Cardiac septum (tissue), 1 donor: ENCODE measurements at regions of chr19 and their contacts with region 1.

Region 1: DNA sequence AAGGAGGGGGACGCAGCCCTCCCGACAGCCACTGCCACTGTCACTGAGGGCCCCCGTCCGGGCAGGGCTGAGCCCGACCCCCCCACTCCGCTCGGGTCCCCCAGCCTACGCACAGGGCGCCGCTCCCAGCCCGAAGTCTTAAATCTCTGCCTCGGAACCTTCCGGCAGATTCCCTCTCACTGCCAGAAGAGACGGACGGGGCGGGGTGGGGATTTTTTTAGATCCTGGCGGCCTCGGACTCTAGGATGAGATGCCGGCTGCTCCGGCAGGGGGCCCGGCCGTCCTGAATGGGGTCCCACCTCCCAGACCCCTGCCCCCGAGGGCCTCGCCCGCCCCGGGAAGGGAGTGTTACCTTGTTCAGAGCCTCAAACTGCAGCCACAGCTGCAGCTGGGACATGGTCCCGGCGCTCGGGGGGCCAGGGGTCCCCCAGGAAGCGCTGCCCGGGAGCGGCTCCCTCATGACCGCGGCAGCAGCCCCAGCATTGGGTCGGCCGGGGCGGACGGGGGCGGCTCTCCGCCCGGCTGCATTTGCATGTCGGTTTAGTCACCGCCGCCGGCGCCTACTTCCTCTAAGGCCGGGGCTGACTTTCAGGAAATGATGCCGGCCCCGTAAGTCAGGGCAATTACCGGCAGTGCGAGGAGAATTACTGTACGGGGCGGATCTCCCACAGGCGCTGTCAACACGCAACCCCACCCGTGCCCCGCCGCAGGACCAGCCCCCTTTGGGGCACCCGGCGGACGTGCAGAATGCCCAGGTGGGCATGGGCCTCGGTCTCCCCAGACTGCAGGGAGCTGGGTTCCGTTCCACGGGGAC is 28.2 kb downstream of the GPX4 start:
- DNase-seq: peak; percentile 97

Region 2: DNA sequence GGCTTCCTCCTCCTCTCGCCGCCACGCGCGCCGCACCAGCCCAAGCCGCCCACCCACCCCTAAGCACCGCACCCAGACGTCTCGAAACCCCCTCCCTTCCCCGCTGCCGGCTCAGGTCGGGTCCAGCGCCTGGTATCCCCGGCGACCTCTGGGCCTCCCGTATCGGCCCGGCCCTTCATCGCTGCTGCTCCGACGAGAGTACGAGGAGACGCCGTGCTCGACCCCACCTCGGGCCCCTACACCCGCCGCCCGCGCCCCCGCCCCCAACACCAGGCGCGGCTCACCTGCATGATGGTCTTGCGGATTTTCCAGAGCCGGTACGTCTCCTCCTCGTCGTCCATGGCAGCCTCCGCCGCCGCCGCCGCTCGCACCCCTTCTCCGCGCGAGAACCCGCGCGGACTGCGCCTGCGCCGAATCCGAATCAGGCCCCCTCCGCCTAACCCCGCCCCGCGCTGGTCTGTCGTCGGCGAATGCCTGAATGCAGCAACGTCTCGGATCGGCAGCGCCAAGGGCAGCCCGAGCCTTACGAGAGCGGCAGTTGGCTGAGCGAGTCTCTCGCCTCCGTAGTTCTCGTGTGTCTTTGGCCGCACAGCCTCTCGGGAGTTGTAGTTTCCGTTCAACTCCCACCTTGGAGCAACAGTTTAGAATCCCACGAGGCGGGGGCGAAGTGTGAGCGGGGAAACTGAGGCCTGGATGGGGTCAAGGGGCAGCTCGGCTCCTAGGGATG is 36.8 kb before region 1 on chr19 and contains the start of gene POLR2E:
- intact Hi-C with region 1: no loop called
- DNase-seq: peak; percentile 100
- total RNA-seq, gene POLR2E: 125 TPM

Region 3: DNA sequence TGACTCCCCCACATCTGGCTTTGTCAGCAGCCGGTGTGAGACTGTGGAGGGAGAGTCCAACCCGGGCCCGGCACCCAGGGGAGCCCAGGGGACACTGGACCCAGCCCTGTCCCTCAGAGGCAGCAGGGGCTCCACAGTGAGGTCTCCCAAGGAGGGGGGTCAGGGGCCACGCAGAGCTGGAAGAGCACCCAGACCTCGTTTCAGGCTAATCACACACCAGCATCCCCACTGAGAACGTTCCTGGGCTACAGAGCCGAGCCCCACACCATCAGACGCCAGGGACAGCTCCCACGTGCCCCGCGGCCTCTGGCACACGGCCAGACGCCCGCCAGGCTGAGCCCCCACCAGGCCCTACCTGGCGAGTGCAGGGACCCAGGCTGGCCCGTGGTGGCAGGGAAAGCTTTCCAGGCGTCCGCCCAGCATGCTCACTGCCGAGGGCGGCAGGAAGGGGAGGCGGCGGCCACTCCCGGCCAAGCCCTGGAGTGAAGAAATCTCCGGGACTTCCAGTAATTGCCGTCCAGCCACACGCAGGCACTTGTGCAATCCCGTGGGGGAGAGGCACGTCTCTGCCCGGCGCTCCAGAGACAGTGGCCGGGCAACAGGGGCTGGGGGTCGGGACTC is 22.9 kb after region 1 on chr19:
- intact Hi-C with region 1: loop called (anchors 1 kb)
- DNase-seq: peak; percentile 96

Region 4: GRCh38 chr19:1173845-1174809 is 42.2 kb after region 1 on chr19 and contains the start of gene SBNO2:
- intact Hi-C with region 1: loop called (anchors 2 kb)
- DNase-seq: peak; percentile 96
- total RNA-seq, gene SBNO2: 37.3 TPM